Right ventricle myocardium inferior (tissue), 1 donor: ENCODE measurements at regions of chr19 and their contacts with region 1.

Region 1: GRCh38 chr19:3403489-3404323 is 37.3 kb downstream of the NFIC start:
- DNase-seq: peak; percentile 93
- ATAC-seq: peak; percentile 77

Region 2: GRCh38 chr19:3336680-3337523 is 66.8 kb before region 1 on chr19:
- intact Hi-C with region 1: loop called (anchors 2 kb)
- DNase-seq: peak; percentile 92
- ATAC-seq: peak; percentile 95

Region 3: GRCh38 chr19:3360421-3361383 is 43.0 kb before region 1 on chr19:
- intact Hi-C with region 1: loop called (anchors 1 kb)
- DNase-seq: peak; percentile 90
- ATAC-seq: peak; percentile 70

Region 4: GRCh38 chr19:3365836-3366752 is 37.6 kb before region 1 on chr19 and contains the start of gene NFIC:
- intact Hi-C with region 1: loop called (anchors 2 kb)
- DNase-seq: peak; percentile 91
- ATAC-seq: peak; percentile 76
- total RNA-seq, gene NFIC: 164 TPM

Region 5: GRCh38 chr19:3387645-3388589 is 15.8 kb before region 1 on chr19:
- intact Hi-C with region 1: loop called (anchors 2 kb)
- DNase-seq: peak; percentile 90
- ATAC-seq: peak; percentile 79

Region 6: DNA sequence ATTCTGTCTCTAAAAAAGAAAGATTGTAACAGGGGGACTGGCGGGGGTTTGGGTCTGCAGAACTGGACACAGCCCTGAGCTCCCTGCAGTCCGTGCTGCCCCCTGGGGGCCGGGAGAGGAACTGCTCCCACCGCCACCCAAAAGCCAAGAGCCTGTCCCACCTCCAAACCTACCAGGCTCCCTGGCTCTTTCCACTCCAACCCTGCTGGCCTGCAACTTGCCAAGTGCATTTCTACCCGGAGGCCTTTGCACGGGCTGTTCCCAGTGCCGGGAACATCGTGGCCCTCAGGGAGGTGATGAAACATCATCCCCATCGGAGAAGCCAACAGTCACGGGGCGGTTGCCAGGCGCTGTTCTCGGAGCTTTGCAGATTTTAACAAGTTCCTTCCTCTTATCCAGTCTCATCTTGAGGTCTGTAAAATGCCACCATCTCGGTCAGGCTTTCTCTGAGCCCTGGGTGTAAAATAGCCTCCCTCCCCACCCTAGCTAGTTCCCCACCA is 25.9 kb after region 1 on chr19:
- intact Hi-C with region 1: loop called (anchors 1 kb)
- DNase-seq: peak; percentile 94
- ATAC-seq: peak; percentile 88